ENCODE measurements at regions of chr4 and their contacts with region 1.

Region 1: DNA sequence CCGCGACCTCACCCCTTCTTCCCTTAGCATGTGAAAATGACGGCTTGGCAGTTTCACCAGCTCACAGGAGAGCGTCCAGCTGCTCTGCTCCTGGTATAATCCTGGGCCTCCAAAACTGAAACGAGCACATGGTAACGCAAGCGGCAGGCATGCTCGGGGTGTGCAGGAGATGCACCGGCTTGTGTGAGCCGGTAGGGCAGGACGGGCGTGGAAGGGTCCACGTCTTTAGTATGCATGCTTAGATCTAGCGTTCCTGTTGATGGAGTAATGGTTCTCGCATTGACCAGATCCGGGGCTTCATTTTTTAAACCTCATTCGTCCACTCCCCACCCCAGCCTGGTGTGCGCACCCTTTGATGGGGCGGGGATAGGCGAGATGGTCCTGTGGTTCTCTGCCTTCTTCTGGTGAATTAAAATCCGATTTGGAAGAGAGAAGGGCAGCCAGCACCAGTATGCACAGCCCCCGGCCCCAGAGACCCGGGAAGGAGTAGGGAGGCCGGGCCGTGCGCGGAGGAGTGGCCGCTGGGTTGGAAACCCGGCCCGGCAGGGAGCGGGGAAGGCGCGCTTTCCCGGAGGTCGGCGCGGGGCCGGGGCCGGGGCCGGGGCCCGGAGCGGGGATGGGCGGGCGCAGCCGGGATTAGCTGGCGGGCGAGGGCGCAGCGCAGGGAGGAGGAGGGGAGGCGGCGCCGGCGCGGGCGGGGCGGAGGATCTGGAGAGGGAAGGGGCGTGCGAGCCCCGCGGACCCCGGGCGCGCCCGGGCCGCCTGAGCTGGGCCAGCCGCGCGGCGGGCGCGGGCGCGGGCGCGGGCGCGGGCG is 39.8 kb downstream of the FAM149A start:
- DNase-seq: no peak
- H3K4me3 ChIP-seq: peak overlapping the region; percentile 41
- H3K27me3 ChIP-seq: peaks cover 6% of the 10 kb centered on the region
- CTCF ChIP-seq: no peak

Region 2: GRCh38 chr4:184873054-184873453 is 1271.3 kb before region 1 on chr4:
- CTCF ChIA-PET with region 1: no interaction called
- POLR2A ChIA-PET with region 1: interaction called, 10 read pairs
- DNase-seq: no peak
- H3K4me3 ChIP-seq: no peak overlapping the region
- H3K27me3 ChIP-seq: no peaks in the 10 kb centered on the region
- CTCF ChIP-seq: no peak

Measured in BJ (cell line).